ENCODE measurements at regions of chr7 and their contacts with region 1.

Region 1: GRCh38 chr7:148242294-148242801 is 348.2 kb upstream of the C7orf33 start:
- DNase-seq: peak in 1 of 2 experiments; percentile 19
- H3K4me3 ChIP-seq: peak overlapping the region in 1 of 4 experiments; percentile 19; a peak in 1 of 8 replicates
- H3K27ac ChIP-seq: no peak overlapping the region
- H3K4me1 ChIP-seq: no peaks in the 10 kb centered on the region
- H3K27me3 ChIP-seq: no peaks in the 10 kb centered on the region
- CTCF ChIP-seq: peak; percentile 16 to 94 (median 86)
- EP300 ChIP-seq: no peak
- POLR2A ChIP-seq: no peak
- RAD21 ChIP-seq: peak; percentile 86 to 93

Region 2: DNA sequence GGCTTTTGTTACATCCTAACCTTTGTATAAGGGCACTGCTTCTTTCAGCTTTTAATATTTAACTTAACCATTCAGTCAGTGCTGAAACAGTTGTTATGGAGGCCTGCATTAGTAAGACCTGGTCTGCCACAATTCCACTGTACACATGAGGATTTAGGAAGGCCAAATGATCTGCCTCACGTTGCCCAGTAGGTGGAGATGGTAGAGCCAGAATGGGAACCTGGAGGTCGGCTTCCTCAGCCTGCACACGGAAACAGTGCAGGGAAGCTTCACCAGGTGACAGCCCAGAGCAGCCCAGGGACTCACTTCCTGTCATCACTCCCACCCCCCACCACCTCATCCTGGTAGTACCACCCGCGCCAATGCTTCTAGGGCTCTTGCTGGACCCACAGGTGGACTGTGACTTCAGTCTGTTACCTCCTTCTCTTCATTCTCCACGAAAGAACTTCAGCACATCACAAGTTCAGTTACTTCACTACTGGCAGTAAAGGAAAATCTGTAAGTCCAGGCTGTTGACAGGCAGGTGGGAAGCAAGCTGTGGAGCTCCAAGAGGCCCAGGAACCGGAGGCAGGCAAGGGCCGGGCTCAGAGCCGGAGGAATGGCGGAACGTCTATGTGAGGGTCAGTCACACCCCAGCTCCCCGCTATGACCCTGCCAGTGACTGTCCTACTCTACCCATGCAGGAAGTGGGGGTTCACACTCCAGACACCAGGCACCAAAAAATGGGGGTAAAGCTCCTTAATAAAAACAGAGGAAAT is 132.1 kb before region 1 on chr7:
- CTCF ChIA-PET with region 1: interaction called, 11 read pairs
- POLR2A ChIA-PET with region 1: no interaction called
- DNase-seq: no peak
- H3K4me3 ChIP-seq: no peak overlapping the region
- H3K27ac ChIP-seq: no peak overlapping the region
- H3K4me1 ChIP-seq: peaks cover 3 to 10% (median 6%) of the 10 kb centered on the region in 4 experiments; a peak in 6 of 7 replicates
- H3K27me3 ChIP-seq: no peaks in the 10 kb centered on the region
- CTCF ChIP-seq: peak; percentile 19 to 54 (median 39); a peak in 3 of 4 replicates
- EP300 ChIP-seq: no peak
- POLR2A ChIP-seq: no peak
- RAD21 ChIP-seq: peak; percentile 49 to 53

Region 3: GRCh38 chr7:148163246-148163645 is 79.1 kb before region 1 on chr7:
- CTCF ChIA-PET with region 1: interaction called, 13 read pairs
- POLR2A ChIA-PET with region 1: no interaction called
- DNase-seq: no peak
- H3K4me3 ChIP-seq: no peak overlapping the region
- H3K27ac ChIP-seq: no peak overlapping the region
- H3K4me1 ChIP-seq: no peaks in the 10 kb centered on the region
- H3K27me3 ChIP-seq: no peaks in the 10 kb centered on the region
- CTCF ChIP-seq: no peak
- EP300 ChIP-seq: no peak
- POLR2A ChIP-seq: no peak
- RAD21 ChIP-seq: no peak

Region 4: GRCh38 chr7:148230296-148230695 is 12.1 kb before region 1 on chr7:
- CTCF ChIA-PET with region 1: interaction called, 12 read pairs
- POLR2A ChIA-PET with region 1: no interaction called
- DNase-seq: no peak
- H3K4me3 ChIP-seq: no peak overlapping the region
- H3K27ac ChIP-seq: no peak overlapping the region
- H3K4me1 ChIP-seq: 0 out of 7 replicates have a peak, but pooled peaks cover 0 to 2% (median 0%) of the 10 kb centered on the region in 4 experiments
- H3K27me3 ChIP-seq: no peaks in the 10 kb centered on the region
- CTCF ChIP-seq: no peak
- EP300 ChIP-seq: no peak
- POLR2A ChIP-seq: no peak
- RAD21 ChIP-seq: no peak